ENCODE measurements at regions of chr1 and their contacts with region 1.

Region 1: GRCh38 chr1:25487628-25488027 is 55.8 kb upstream of the LDLRAP1 start:
- DNase-seq: no peak
- H3K4me3 ChIP-seq: no peak overlapping the region
- H3K27ac ChIP-seq: no peak overlapping the region
- H3K4me1 ChIP-seq: peaks cover 0 to 12% (median 7%) of the 10 kb centered on the region in 4 experiments; a peak in 5 of 7 replicates
- H3K27me3 ChIP-seq: no peaks in the 10 kb centered on the region
- CTCF ChIP-seq: peak in 2 of 3 experiments; percentile 32 to 58; a peak in 2 of 4 replicates
- EP300 ChIP-seq: no peak
- POLR2A ChIP-seq: no peak
- RAD21 ChIP-seq: 0 out of 4 replicates have a peak, but pooled peaks of 1 of the 2 experiments have one; percentile 12

Region 2: DNA sequence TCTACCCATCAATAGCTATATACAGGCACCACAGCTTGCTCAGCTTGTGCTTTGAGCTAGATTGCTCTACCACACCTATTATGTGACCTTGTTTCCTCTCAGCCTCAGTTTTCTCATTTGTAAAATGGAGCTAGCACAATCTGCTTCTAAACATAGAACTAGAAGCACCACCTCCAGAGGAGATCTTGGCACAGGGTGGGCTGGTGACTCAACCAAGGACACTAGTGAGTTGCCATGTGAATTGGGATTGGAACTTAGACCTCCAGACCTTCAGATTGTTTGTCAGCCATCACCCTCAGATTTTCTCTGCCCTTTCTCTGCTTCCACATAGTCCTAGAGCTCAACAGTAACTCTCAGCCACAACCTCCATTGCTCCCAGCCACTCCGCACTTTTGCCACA is 59.9 kb before region 1 on chr1:
- CTCF ChIA-PET with region 1: interaction called, 10 read pairs
- POLR2A ChIA-PET with region 1: no interaction called
- DNase-seq: no peak
- H3K4me3 ChIP-seq: no peak overlapping the region
- H3K27ac ChIP-seq: no peak overlapping the region
- H3K4me1 ChIP-seq: 0 out of 7 replicates have a peak, but pooled peaks cover 0 to 3% (median 0%) of the 10 kb centered on the region in 4 experiments
- H3K27me3 ChIP-seq: no peaks in the 10 kb centered on the region; a peak in 2 of 7 replicates
- CTCF ChIP-seq: no peak
- EP300 ChIP-seq: no peak
- POLR2A ChIP-seq: no peak
- RAD21 ChIP-seq: no peak

Region 3: GRCh38 chr1:25450891-25451290 is 36.7 kb before region 1 on chr1:
- CTCF ChIA-PET with region 1: interaction called, 12 read pairs
- POLR2A ChIA-PET with region 1: no interaction called
- DNase-seq: no peak
- H3K4me3 ChIP-seq: no peak overlapping the region
- H3K27ac ChIP-seq: no peak overlapping the region
- H3K4me1 ChIP-seq: peaks cover 0 to 4% (median 0%) of the 10 kb centered on the region in 4 experiments; a peak in 2 of 7 replicates
- H3K27me3 ChIP-seq: no peaks in the 10 kb centered on the region
- CTCF ChIP-seq: no peak
- EP300 ChIP-seq: no peak
- POLR2A ChIP-seq: no peak
- RAD21 ChIP-seq: no peak

Region 4: GRCh38 chr1:25456502-25456901 is 31.1 kb before region 1 on chr1:
- CTCF ChIA-PET with region 1: interaction called, 12 read pairs
- POLR2A ChIA-PET with region 1: no interaction called
- DNase-seq: no peak
- H3K4me3 ChIP-seq: no peak overlapping the region
- H3K27ac ChIP-seq: no peak overlapping the region
- H3K4me1 ChIP-seq: no peaks in the 10 kb centered on the region
- H3K27me3 ChIP-seq: no peaks in the 10 kb centered on the region
- CTCF ChIP-seq: no peak
- EP300 ChIP-seq: no peak
- POLR2A ChIP-seq: no peak
- RAD21 ChIP-seq: no peak

Region 5: GRCh38 chr1:25476186-25477097 is 11.2 kb before region 1 on chr1:
- CTCF ChIA-PET with region 1: interaction called, 49 read pairs
- POLR2A ChIA-PET with region 1: no interaction called
- DNase-seq: no peak
- H3K4me3 ChIP-seq: no peak overlapping the region
- H3K27ac ChIP-seq: no peak overlapping the region
- H3K4me1 ChIP-seq: peaks cover 0 to 4% (median 0%) of the 10 kb centered on the region in 4 experiments; a peak in 2 of 7 replicates
- H3K27me3 ChIP-seq: no peaks in the 10 kb centered on the region
- CTCF ChIP-seq: no peak
- EP300 ChIP-seq: no peak
- POLR2A ChIP-seq: no peak
- RAD21 ChIP-seq: no peak

Region 6: GRCh38 chr1:25503551-25504426 is 16.2 kb after region 1 on chr1:
- CTCF ChIA-PET with region 1: interaction called, 93 read pairs
- POLR2A ChIA-PET with region 1: interaction called, 8 read pairs
- DNase-seq: peak; percentile 68 to 80
- H3K4me3 ChIP-seq: no peak overlapping the region
- H3K27ac ChIP-seq: no peak overlapping the region
- H3K4me1 ChIP-seq: peaks cover 8 to 17% (median 11%) of the 10 kb centered on the region in 4 experiments
- H3K27me3 ChIP-seq: no peaks in the 10 kb centered on the region
- CTCF ChIP-seq: peak; percentile 78 to 91 (median 87)
- EP300 ChIP-seq: no peak
- POLR2A ChIP-seq: no peak
- RAD21 ChIP-seq: peak; percentile 77 to 78

Region 7: DNA sequence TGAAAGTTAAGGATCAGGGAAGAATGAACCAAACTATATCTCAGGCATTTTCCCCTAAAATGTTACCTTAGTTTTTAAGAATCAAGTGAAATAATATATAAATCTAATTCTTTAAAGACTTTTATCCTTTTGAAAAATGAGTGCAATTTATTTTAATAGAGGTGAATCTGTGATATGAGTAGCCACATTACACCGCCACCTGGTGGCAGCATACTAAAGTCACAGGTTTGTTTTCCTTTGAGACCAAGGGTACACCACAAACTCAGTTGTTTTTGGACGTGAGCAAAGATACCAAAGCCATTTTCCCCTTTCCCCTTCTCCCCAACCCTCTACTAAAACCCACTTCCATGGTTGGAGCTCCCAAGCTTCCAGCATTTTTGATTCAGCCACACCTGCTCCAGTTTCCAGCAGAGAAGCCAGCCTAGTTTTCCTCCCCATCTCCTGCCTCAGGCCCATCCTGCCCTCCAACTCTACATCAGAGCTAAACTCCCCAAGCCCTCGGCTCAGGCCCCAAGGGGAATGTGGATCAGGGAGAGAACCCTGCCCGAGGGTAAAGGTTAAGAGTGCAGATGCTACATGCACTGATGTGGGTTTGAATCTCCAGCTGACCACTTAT is 32.9 kb after region 1 on chr1:
- CTCF ChIA-PET with region 1: interaction called, 53 read pairs
- POLR2A ChIA-PET with region 1: no interaction called
- DNase-seq: peak in 1 of 2 experiments; percentile 77
- H3K4me3 ChIP-seq: no peak overlapping the region
- H3K27ac ChIP-seq: no peak overlapping the region
- H3K4me1 ChIP-seq: peaks cover 4 to 8% (median 4%) of the 10 kb centered on the region in 4 experiments; a peak in 6 of 7 replicates
- H3K27me3 ChIP-seq: no peaks in the 10 kb centered on the region; a peak in 1 of 7 replicates
- CTCF ChIP-seq: peak in 2 of 3 experiments; percentile 63 to 76; a peak in 3 of 4 replicates
- EP300 ChIP-seq: no peak
- POLR2A ChIP-seq: no peak
- RAD21 ChIP-seq: peak; percentile 51 to 64